ENCODE measurements at regions of chr1 and their contacts with region 1.

Region 1: DNA sequence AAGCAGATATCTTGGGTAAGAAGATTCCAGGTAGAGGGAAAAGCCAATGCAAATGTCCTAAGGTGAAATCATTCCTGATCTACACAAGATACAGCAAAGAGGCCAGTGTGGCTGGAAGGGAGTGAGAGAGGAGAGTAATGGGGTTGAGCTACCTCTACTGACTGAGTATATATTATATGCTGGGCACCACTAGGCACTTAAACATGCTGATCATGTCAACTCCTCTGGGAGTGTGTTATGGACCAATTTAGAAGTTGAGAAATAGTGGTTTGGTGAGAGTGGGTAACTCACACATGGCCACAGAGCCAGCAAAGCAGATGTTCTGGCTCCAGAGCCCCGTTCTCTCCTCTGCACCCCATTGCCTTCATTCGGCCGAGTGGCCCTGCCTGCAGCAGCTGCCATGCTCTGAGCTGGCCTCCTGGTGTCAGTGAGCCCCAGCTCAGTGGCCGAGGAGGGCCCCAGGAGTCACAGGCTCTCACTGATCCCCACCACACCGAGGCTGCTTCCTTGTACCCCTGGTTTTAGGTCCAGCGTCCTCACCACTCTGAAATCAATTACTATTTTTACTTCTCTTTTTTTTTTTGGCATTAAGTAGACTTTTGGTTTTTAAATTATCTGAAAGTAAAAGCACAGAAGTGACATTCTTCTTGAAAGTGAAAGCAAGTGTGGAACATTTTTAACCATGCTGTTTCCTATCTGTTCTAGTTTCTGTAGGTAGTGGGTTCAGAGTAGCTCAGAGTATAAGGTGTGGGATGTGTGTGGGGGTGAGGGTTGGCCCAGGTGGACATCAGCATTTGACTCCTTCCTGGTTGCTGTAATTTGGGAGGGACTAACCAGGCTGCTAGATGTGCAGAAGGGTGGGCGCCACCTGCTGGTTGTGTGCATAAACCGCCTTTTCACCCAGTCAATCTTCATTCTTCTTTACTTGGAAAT is 45.8 kb upstream of the CRNN start:
- DNase-seq: peak; percentile 41
- H3K27ac ChIP-seq: no peak overlapping the region
- CTCF ChIP-seq: peak; percentile 83

Region 2: DNA sequence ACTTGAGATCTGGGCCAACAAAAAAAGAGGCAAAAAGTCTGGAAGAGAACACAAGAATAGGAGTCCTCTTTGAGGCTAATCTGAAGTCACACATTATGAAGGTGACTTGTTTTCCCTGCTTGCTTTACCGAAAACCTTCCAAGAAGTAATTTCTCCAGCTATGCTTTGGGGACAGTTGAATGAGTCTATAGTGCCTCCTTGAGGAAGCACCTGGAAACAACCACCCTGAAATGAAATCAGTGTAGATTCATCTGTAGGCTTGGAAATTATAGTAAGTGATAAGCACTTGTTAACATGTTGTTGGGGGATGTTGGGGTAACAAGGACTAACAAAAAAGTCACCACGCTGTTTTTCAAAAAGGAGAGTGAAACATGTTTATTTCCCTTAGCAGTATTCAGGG is 277.4 kb before region 1 on chr1:
- CTCF ChIA-PET with region 1: interaction called, 12 read pairs
- POLR2A ChIA-PET with region 1: no interaction called
- DNase-seq: no peak
- H3K27ac ChIP-seq: peak overlapping the region; percentile 91
- CTCF ChIP-seq: no peak; the same call in 1 of the 2 replicates

Region 3: GRCh38 chr1:152189657-152190442 is 270.0 kb before region 1 on chr1:
- CTCF ChIA-PET with region 1: interaction called, 12 read pairs
- POLR2A ChIA-PET with region 1: no interaction called
- DNase-seq: peak; percentile 48
- H3K27ac ChIP-seq: peak overlapping the region; percentile 63
- CTCF ChIP-seq: peak; percentile 71

Region 4: GRCh38 chr1:152347116-152347728 is 112.6 kb before region 1 on chr1:
- CTCF ChIA-PET with region 1: interaction called, 12 read pairs
- POLR2A ChIA-PET with region 1: no interaction called
- DNase-seq: peak; percentile 26
- H3K27ac ChIP-seq: no peak overlapping the region
- CTCF ChIP-seq: peak; percentile 91

Region 5: DNA sequence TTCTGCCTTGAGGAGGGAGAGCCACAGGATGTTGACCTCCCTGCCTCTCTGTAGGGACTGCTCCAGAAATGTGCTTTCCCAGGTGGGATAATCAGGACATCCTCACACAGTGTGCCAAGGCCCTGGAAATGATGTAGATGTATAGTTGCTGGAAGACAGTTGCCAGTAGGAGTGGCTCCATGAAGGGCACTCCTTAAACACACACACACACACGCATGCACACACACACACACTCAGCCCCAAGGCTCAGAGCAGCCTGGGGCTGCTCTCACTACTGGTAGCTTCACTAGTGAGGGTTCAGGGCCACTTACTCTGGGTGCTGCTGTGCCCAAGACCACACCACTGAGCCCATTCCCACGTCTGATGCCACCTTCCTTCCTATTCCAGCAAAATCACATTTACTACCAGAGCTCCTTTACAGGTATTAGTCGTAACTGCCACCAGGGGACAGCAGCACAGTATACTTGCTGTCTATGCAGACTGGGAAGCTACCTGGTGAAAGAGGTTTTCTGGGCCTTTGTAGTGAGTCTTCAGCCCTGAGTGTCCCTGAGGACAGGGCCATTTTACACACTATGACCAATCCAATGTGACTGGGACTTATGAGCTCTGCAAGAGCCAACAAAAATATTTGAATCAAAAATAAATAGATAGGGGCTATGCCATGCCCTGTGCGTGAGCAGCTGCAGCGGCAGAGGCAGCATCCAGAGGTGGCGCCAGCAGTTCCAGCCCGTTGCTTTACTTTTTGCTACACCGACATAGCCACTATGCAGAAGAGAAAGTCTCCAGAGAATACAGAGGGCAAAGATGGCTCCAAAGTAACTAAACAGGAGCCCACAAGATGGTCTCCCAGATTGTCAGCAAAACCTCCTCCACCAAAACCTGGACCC is 60.8 kb before region 1 on chr1:
- CTCF ChIA-PET with region 1: interaction called, 24 read pairs
- POLR2A ChIA-PET with region 1: no interaction called
- DNase-seq: peak; percentile 60
- H3K27ac ChIP-seq: no peak overlapping the region
- CTCF ChIP-seq: peak; percentile 55

Region 6: GRCh38 chr1:152440635-152441471 is 19.0 kb before region 1 on chr1:
- CTCF ChIA-PET with region 1: interaction called, 15 read pairs
- POLR2A ChIA-PET with region 1: no interaction called
- DNase-seq: peak; percentile 87
- H3K27ac ChIP-seq: peak overlapping the region; percentile 80
- CTCF ChIP-seq: peak; percentile 76

Region 7: GRCh38 chr1:152533327-152533938 is 73.6 kb after region 1 on chr1:
- CTCF ChIA-PET with region 1: interaction called, 15 read pairs
- POLR2A ChIA-PET with region 1: no interaction called
- DNase-seq: peak; percentile 58
- H3K27ac ChIP-seq: no peak overlapping the region
- CTCF ChIP-seq: peak; percentile 85

Measured in RWPE1 (cell line).